ENCODE measurements at regions of chr4 and their contacts with region 1.

Region 1: DNA sequence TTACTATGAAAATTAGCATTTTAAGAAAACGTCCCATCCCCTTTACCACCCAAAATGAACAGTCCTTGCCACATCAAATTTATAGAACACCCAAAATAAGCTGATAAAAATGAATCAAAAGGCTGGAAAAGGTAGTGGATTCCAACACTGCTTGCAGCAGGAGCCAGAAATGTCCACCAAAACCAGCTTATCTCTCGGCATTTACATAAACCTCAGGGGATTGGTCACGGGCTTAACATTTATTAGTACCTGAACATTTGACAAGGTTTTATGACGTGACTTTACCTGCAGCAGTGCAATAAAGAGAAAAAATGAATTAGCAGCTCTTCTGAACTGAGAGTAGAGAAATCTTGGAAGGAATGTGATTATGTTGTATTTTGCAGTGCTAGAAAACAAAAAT is 31.6 kb downstream of the ATP8A1 start:
- DNase-seq: no peak
- ATAC-seq: no peak
- H3K4me3 ChIP-seq: no peak overlapping the region
- H3K27ac ChIP-seq: no peak overlapping the region
- H3K4me1 ChIP-seq: no peaks in the 10 kb centered on the region
- H3K27me3 ChIP-seq: no peaks in the 10 kb centered on the region
- CTCF ChIP-seq: no peak

Region 2: DNA sequence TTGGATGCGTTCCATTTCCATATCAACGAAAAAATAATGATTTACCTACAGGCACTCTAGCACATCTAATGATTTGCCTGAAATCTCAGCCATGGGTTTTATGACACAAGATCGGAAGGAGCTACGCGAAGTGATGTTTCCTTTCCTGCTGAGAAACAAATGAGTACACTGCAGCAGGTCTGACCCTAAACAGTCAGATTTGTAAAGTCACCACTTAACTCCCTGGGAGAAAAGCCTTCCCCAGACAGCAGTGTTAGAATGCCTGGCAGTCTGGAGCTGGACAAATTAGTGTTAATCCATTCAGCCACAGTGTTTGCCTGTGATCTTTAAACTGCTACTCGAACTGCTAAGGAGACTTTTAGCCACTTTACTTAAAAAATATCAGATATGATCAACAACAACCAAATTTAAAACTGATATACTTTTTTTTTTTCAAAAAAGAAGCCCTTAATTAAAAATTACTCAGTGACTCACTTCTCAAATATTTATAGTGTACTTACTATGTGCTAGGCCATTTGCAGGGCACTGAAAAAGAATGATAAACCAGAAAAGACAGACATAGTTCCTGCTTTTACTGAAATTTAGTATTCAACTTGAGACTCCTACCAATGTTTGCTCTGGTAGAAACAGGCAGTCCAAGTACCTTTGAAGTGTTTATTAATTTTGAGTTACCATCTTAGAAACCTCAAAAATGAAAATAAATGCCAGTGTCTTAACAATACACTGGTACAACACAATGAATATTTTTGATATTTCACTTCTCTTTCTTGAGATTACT is 123.5 kb before region 1 on chr4:
- CTCF ChIA-PET with region 1: no interaction called
- POLR2A ChIA-PET with region 1: no interaction called
- in situ Hi-C with region 1: no loop called
- intact Hi-C with region 1: no loop called
- DNase-seq: no peak
- ATAC-seq: no peak
- H3K4me3 ChIP-seq: no peak overlapping the region
- H3K27ac ChIP-seq: no peak overlapping the region
- H3K4me1 ChIP-seq: no peaks in the 10 kb centered on the region
- H3K27me3 ChIP-seq: no peaks in the 10 kb centered on the region
- CTCF ChIP-seq: no peak

Region 3: GRCh38 chr4:42732776-42733175 is 107.4 kb after region 1 on chr4:
- CTCF ChIA-PET with region 1: no interaction called
- POLR2A ChIA-PET with region 1: interaction called, 13 read pairs
- in situ Hi-C with region 1: no loop called
- intact Hi-C with region 1: no loop called
- DNase-seq: no peak
- ATAC-seq: no peak
- H3K4me3 ChIP-seq: no peak overlapping the region
- H3K27ac ChIP-seq: no peak overlapping the region
- H3K4me1 ChIP-seq: no peaks in the 10 kb centered on the region
- H3K27me3 ChIP-seq: no peaks in the 10 kb centered on the region
- CTCF ChIP-seq: no peak

Measured in Panc1 (cell line).